ENCODE measurements at regions of chr11 and their contacts with region 1.

Region 1: GRCh38 chr11:8138526-8138925 is 30.3 kb downstream of the RIC3 start:
- DNase-seq: no peak
- ATAC-seq: no peak
- H3K4me3 ChIP-seq: no peak overlapping the region
- H3K27ac ChIP-seq: no peak overlapping the region
- H3K4me1 ChIP-seq: no peaks in the 10 kb centered on the region
- H3K27me3 ChIP-seq: no peaks in the 10 kb centered on the region
- CTCF ChIP-seq: no peak

Region 2: GRCh38 chr11:8593935-8594909 is 455.7 kb after region 1 on chr11 and contains the start of gene STK33:
- CTCF ChIA-PET with region 1: no interaction called
- POLR2A ChIA-PET with region 1: interaction called, 11 read pairs
- in situ Hi-C with region 1: no loop called
- intact Hi-C with region 1: no loop called
- DNase-seq: no peak
- ATAC-seq: peak; percentile 89
- H3K4me3 ChIP-seq: peak within 1 kb of the TSS; percentile 52 to 53
- H3K27ac ChIP-seq: no peak within 1 kb of the TSS
- H3K4me1 ChIP-seq: peaks cover 6% of the 10 kb centered on the region; the same call in 1 of the 2 replicates
- H3K27me3 ChIP-seq: peaks cover 60% of the 10 kb centered on the region
- CTCF ChIP-seq: no peak
- total RNA-seq, gene STK33: 3.9 TPM

Measured in Panc1 (cell line).